ENCODE measurements at regions of chr2 and their contacts with region 1.

Region 1: DNA sequence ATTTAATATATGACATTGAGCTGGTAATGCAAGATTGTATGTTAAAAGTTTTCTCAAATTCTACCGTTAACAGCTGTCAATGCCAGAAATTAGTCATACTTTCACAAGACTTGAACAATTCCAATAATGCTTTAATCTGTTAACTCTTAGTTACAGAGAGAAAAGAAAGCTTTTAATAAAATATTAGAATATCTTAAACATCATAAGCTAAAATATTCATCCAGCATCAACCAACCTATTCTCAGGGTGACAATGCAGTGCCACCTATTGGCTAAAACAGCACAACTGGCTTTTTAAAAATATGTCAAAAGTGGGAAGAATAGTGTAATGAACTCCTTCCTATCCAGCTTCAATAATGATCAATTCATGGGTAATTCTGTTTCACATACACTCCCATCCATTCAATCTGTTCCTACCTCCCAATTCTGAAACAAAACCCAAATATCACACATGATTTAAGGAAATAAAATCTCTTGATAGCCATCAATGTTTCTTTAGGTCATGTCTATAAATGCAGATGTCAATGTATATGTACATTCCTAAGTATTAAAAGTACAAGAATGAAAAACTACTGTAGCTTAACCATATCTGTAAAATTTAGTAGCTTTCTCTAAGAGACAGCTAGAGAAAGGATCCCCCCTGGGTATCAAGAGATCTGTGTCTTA is 79.8 kb upstream of the CCDC141 start:
- DNase-seq: peak in 5 of 9 donors; percentile 31 to 49 (median 45)
- ATAC-seq: peak; percentile 49
- H3K4me3 ChIP-seq: no peak overlapping the region
- H3K4me3 Mint-ChIP-seq: no peak overlapping the region
- H3K27ac ChIP-seq: no peak overlapping the region
- H3K27ac Mint-ChIP-seq: no peak overlapping the region
- H3K4me1 ChIP-seq: no peaks in the 10 kb centered on the region
- H3K4me1 Mint-ChIP-seq: no peaks in the 10 kb centered on the region
- H3K27me3 ChIP-seq: no peaks in the 10 kb centered on the region
- H3K27me3 Mint-ChIP-seq: no peaks in the 10 kb centered on the region

Region 2: GRCh38 chr2:178796079-178796677 is 333.5 kb before region 1 on chr2:
- CTCF ChIA-PET with region 1: interaction called, 11 read pairs
- POLR2A ChIA-PET with region 1: no interaction called
- intact Hi-C with region 1: loop called (anchors 1 kb)
- DNase-seq: peak in 5 of 9 donors; percentile 27 to 33 (median 28)
- ATAC-seq: no peak
- H3K4me3 ChIP-seq: no peak overlapping the region
- H3K4me3 Mint-ChIP-seq: no peak overlapping the region
- H3K27ac ChIP-seq: no peak overlapping the region
- H3K27ac Mint-ChIP-seq: no peak overlapping the region
- H3K4me1 ChIP-seq: no peaks in the 10 kb centered on the region
- H3K4me1 Mint-ChIP-seq: no peaks in the 10 kb centered on the region
- H3K27me3 ChIP-seq: no peaks in the 10 kb centered on the region
- H3K27me3 Mint-ChIP-seq: no peaks in the 10 kb centered on the region

Region 3: DNA sequence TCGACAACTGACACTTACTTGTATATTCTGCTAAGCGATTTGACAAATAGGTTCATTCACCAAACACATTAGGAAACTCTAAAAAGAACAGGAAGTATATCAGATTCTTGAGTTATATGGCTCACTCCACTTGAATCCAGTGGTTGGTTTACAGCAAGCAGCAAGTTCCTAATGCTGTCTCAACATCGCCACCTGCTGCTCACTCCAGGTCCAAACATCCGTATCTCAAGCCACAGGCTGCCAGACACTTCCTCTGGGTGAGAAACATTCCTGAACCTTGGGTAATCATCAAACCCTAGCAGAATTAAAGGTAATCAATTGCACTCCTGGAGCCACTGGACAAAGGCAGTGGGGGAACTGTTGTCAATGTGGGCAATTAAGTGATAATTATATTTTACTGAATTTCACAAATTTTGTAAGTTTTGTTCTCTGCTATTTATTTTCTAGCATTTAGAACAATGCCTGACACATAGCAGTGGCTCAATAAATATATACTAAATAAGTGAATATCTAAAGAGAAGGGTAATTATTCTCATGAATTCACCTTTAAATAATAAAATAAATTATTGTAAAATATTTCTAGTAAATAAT is 215.4 kb before region 1 on chr2:
- CTCF ChIA-PET with region 1: interaction called, 7 read pairs
- POLR2A ChIA-PET with region 1: no interaction called
- intact Hi-C with region 1: loop called (anchors 1 to 2 kb)
- DNase-seq: peak; percentile 32 to 67 (median 59)
- ATAC-seq: peak; percentile 90
- H3K4me3 ChIP-seq: no peak overlapping the region
- H3K4me3 Mint-ChIP-seq: no peak overlapping the region
- H3K27ac ChIP-seq: no peak overlapping the region
- H3K27ac Mint-ChIP-seq: no peak overlapping the region
- H3K4me1 ChIP-seq: no peaks in the 10 kb centered on the region
- H3K4me1 Mint-ChIP-seq: peaks cover 0 to 17% (median 4%) of the 10 kb centered on the region in 7 donors
- H3K27me3 ChIP-seq: no peaks in the 10 kb centered on the region
- H3K27me3 Mint-ChIP-seq: no peaks in the 10 kb centered on the region

Region 4: GRCh38 chr2:178976351-178976750 is 153.4 kb before region 1 on chr2:
- CTCF ChIA-PET with region 1: interaction called, 30 read pairs
- POLR2A ChIA-PET with region 1: no interaction called
- intact Hi-C with region 1: loop called (anchors 1 to 5 kb)
- DNase-seq: no peak
- ATAC-seq: no peak
- H3K4me3 ChIP-seq: no peak overlapping the region
- H3K4me3 Mint-ChIP-seq: no peak overlapping the region
- H3K27ac ChIP-seq: no peak overlapping the region
- H3K27ac Mint-ChIP-seq: no peak overlapping the region
- H3K4me1 ChIP-seq: no peaks in the 10 kb centered on the region
- H3K4me1 Mint-ChIP-seq: peaks cover 0 to 6% (median 2%) of the 10 kb centered on the region in 7 donors
- H3K27me3 ChIP-seq: no peaks in the 10 kb centered on the region
- H3K27me3 Mint-ChIP-seq: no peaks in the 10 kb centered on the region

Region 5: DNA sequence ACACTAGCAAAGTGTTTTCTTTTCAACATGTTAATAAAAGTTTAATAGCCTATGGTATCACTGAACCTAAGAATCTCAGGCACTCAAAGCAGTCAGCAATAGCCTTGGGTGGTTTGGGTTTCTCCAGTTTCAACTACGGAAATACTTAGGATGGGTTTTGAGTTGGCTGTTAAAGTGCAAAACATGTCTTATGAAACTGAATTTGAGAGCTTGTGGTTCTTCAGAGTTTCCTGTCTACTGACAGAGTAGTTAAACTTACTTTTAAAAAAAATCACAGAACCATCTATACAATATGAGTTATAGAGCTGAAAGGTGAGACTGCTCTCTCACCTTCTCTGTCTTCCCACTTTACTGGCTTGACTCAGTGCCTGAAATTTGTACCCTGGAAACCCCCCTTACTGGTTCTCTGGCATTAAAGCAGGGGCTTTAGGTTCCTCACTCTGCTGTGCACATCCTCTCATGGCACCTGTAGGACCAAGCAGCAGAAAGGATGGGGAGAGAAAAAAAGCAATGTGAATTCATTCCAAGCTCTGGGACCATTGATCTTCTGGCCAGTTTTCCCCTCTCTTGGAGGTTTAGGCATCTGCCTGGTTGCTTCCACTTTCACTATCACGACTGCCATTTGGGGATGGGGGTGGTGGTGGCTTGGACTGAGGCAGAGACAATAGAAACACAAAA is 97.8 kb before region 1 on chr2:
- CTCF ChIA-PET with region 1: interaction called, 5 read pairs
- POLR2A ChIA-PET with region 1: no interaction called
- intact Hi-C with region 1: loop called in 1 of 2 experiments (anchors 5 kb)
- DNase-seq: peak in 8 of 9 donors; percentile 29 to 77 (median 67)
- ATAC-seq: peak; percentile 92
- H3K4me3 ChIP-seq: peak overlapping the region; percentile 40
- H3K4me3 Mint-ChIP-seq: peak overlapping the region; percentile 71 to 87 (median 84)
- H3K27ac ChIP-seq: peak overlapping the region; percentile 80
- H3K27ac Mint-ChIP-seq: peak overlapping the region; percentile 93 to 99 (median 98)
- H3K4me1 ChIP-seq: peaks cover 0 to 15% of the 10 kb centered on the region in 2 donors
- H3K4me1 Mint-ChIP-seq: peaks cover 13 to 76% (median 46%) of the 10 kb centered on the region in 7 donors
- H3K27me3 ChIP-seq: no peaks in the 10 kb centered on the region
- H3K27me3 Mint-ChIP-seq: no peaks in the 10 kb centered on the region